ENCODE measurements at regions of chr20 and their contacts with region 1.

Region 1: DNA sequence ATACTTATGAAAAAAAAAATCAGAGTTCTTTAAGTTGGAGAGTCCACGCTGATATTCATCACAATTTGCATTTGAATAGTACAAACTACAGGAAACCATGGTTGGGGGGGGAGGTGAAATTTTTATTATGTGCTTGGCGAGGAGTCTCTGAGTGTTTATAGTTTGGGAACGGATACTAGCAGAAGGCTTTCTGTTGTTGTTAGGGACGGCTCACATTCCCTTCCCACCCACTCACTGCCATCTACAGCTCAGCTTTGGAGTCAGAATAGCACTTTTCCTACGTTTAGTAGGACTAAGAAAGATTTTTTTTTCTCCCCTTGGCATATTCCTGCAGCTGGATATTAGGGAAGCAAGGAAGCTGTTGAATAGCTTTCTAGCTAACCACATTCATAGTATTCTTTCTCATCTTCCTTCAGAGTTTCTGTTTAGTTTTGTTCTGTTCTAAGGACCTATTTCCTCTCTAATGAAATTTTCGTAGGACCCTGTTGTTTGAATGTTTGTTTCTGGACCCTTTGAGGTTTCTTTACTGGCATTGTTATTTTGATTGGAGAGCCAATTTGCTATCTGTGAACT is 235.1 kb upstream of the ZNF217 start:
- DNase-seq: peak; percentile 96
- H3K4me3 ChIP-seq: peak overlapping the region in 2 of 3 experiments; percentile 19 to 57
- H3K27ac ChIP-seq: peak overlapping the region; percentile 100
- H3K4me1 ChIP-seq: peaks cover 35% of the 10 kb centered on the region
- H3K27me3 ChIP-seq: no peaks in the 10 kb centered on the region
- CTCF ChIP-seq: no peak
- POLR2A ChIP-seq: peak; percentile 47

Region 2: DNA sequence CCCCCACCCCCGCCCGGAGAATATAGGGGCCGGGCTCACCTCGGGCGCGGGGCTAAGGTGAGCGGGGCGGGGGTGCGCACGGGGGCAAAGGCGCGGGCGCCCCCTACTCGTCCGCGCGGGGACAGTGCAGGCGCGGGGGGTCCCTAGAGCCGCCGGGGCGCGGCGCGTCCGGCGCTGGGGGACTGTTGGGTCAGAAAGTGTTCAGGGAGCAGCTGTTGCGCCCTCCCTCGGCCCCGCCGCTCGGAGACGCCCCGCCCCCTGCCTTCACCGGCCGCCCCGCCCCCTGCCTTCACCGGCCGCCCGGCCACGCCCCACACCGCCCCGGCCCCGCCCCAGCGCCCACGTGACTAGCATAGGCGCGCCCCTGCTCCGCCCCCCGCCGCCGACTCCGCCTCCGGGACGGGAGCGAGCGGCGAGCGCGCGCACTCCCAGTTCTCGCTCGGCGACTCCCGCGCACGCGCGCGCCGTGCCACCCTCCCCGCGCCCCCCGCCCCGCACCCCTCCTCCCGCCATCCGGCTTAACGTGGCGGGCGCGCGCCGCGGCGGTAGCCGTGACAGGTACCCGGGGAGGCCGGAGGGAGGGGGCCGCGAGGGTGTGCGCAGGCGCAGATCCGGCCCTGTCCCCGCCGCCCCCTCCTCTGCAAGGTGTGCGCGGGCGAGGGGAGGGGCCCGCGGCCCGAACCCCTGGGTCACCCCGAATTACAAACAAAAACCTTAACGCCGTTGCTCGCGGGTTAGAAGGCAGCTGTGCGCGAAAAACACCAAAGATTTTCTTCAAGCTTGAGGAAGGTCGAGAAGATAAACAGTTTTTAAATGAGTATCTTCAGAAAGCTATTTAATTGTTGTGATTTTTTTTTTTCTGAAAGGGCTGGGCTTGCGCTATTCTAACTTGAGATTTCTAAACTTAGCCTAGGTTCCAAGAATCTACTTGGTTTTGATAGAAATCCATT is 234.4 kb before region 1 on chr20:
- CTCF ChIA-PET with region 1: interaction called, 7 read pairs
- POLR2A ChIA-PET with region 1: no interaction called
- dilution Hi-C with region 1: no loop called
- intact Hi-C with region 1: loop called (anchors 1 kb)
- DNase-seq: peak; percentile 84
- H3K4me3 ChIP-seq: peak overlapping the region; percentile 82 to 94 (median 93)
- H3K27ac ChIP-seq: peak overlapping the region; percentile 82
- H3K4me1 ChIP-seq: peaks cover 42% of the 10 kb centered on the region
- H3K27me3 ChIP-seq: no peaks in the 10 kb centered on the region
- CTCF ChIP-seq: no peak
- POLR2A ChIP-seq: no peak

Region 3: GRCh38 chr20:53643031-53643832 is 185.5 kb before region 1 on chr20:
- CTCF ChIA-PET with region 1: no interaction called
- POLR2A ChIA-PET with region 1: no interaction called
- dilution Hi-C with region 1: no loop called
- intact Hi-C with region 1: loop called (anchors 2 kb)
- DNase-seq: peak; percentile 91
- H3K4me3 ChIP-seq: peak overlapping the region in 1 of 3 experiments; percentile 28
- H3K27ac ChIP-seq: peak overlapping the region; percentile 89
- H3K4me1 ChIP-seq: peaks cover 20% of the 10 kb centered on the region
- H3K27me3 ChIP-seq: no peaks in the 10 kb centered on the region
- CTCF ChIP-seq: no peak
- POLR2A ChIP-seq: no peak

Region 4: GRCh38 chr20:53718142-53719021 is 110.4 kb before region 1 on chr20:
- CTCF ChIA-PET with region 1: no interaction called
- POLR2A ChIA-PET with region 1: interaction called, 5 read pairs
- dilution Hi-C with region 1: no loop called
- intact Hi-C with region 1: loop called (anchors 1 kb)
- DNase-seq: no peak
- H3K4me3 ChIP-seq: no peak overlapping the region
- H3K27ac ChIP-seq: no peak overlapping the region
- H3K4me1 ChIP-seq: peaks cover 16% of the 10 kb centered on the region
- H3K27me3 ChIP-seq: no peaks in the 10 kb centered on the region
- CTCF ChIP-seq: no peak
- POLR2A ChIP-seq: no peak

Region 5: GRCh38 chr20:53785320-53785719 is 43.4 kb before region 1 on chr20:
- CTCF ChIA-PET with region 1: no interaction called
- POLR2A ChIA-PET with region 1: no interaction called
- dilution Hi-C with region 1: no loop called
- intact Hi-C with region 1: no loop called
- DNase-seq: no peak
- H3K4me3 ChIP-seq: no peak overlapping the region
- H3K27ac ChIP-seq: no peak overlapping the region
- H3K4me1 ChIP-seq: peaks cover 14% of the 10 kb centered on the region
- H3K27me3 ChIP-seq: no peaks in the 10 kb centered on the region
- CTCF ChIP-seq: no peak
- POLR2A ChIP-seq: no peak

Region 6: DNA sequence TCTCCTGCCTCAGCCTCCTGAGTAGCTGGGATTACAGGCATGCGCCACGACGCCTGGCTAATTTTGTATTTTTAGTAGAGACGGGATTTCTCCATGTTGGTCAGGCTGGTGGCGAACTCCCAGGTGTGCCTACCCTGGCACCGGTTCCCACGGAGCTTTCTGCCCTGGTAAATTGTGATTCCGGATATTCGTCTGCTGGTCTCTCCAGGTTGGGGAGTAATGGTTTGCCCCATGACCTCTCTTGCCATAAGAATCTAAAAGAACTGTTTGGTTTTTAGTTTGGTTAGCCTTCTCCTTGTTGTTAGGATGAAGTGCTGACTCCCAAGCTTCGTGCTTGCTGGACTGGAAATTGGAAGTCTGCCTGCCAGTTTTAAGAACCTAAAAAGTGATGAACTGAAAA is 17.9 kb after region 1 on chr20:
- CTCF ChIA-PET with region 1: no interaction called
- POLR2A ChIA-PET with region 1: no interaction called
- dilution Hi-C with region 1: no loop called
- intact Hi-C with region 1: no loop called
- DNase-seq: no peak
- H3K4me3 ChIP-seq: no peak overlapping the region
- H3K27ac ChIP-seq: no peak overlapping the region
- H3K4me1 ChIP-seq: no peaks in the 10 kb centered on the region
- H3K27me3 ChIP-seq: no peaks in the 10 kb centered on the region
- CTCF ChIP-seq: no peak
- POLR2A ChIP-seq: no peak

Region 7: DNA sequence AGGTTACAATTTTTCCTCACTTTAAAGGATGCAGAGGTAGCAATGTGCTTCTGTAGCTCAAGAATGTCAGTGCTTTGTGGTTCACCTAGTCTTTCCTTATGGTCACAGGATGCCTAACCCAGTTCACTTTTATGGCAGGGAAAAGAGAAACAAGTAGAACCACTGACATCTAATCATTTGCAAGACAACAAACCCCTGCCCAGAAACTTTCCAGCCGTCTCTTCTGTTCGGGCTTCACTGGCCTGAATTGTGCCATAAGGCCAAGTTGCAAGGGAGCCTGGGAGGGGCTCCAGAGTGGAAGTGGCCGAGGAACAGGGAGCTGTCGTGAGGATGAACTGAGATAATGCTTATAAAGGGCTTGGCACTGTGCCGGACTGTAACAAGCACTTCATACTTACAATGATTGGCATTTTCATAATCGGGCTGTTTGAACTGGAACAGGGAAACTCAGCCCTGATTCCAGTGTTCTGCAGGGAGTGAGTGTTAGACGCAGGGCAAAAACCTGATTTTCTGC is 29.0 kb after region 1 on chr20:
- CTCF ChIA-PET with region 1: no interaction called
- POLR2A ChIA-PET with region 1: no interaction called
- dilution Hi-C with region 1: no loop called
- intact Hi-C with region 1: no loop called
- DNase-seq: peak; percentile 27
- H3K4me3 ChIP-seq: no peak overlapping the region
- H3K27ac ChIP-seq: no peak overlapping the region
- H3K4me1 ChIP-seq: no peaks in the 10 kb centered on the region
- H3K27me3 ChIP-seq: no peaks in the 10 kb centered on the region
- CTCF ChIP-seq: no peak
- POLR2A ChIP-seq: no peak

Region 8: DNA sequence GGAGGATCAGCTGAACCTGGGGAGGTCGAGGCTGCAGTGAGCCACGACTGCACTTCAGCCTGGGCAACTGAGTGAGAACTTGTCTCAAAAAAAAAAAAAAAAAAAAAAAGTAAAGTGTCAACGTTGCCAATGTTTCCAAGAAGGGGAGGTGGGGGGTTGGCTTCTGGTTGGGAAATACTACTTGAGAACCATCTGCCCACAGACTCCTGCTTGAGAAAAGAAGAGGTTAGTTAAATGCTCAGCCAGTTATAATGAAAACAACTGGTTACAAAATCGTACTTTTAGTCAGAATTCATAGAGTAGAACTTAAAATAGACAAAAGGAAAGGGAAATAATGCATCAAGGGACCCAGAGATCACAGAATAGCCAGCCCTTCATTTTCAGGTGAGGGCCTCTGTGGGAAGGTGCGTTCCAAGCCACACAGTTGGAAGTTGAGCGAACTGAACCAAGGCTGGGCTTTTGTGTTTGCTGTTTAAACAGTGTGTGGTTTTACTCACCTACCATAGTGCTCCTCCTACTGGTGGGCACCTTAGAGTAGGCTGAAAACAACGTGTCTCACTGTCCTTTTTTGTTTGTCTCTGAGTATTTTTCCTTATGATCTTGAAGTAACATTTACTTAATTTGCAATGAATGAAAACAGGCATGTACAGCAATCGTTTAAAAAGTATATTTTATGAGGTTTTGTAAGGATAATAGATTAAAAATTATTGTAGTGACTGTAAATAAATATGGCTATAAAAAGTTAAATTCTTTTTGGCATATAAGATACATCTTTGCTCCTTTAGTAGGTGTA is 40.9 kb after region 1 on chr20:
- CTCF ChIA-PET with region 1: interaction called, 6 read pairs
- POLR2A ChIA-PET with region 1: no interaction called
- dilution Hi-C with region 1: no loop called
- intact Hi-C with region 1: loop called (anchors 1 kb)
- DNase-seq: peak; percentile 82
- H3K4me3 ChIP-seq: no peak overlapping the region
- H3K27ac ChIP-seq: no peak overlapping the region
- H3K4me1 ChIP-seq: peaks cover 22% of the 10 kb centered on the region
- H3K27me3 ChIP-seq: no peaks in the 10 kb centered on the region
- CTCF ChIP-seq: peak; percentile 74 to 77
- POLR2A ChIP-seq: no peak